WTC11 (cell line): ENCODE measurements at regions of chr21 and their contacts with region 1.

Region 1: GRCh38 chr21:15552914-15553494 is 176.8 kb upstream of the USP25 start:
- DNase-seq: no peak
- ATAC-seq: no peak
- H3K4me3 Mint-ChIP-seq: no peak overlapping the region
- H3K27ac Mint-ChIP-seq: no peak overlapping the region
- H3K4me1 Mint-ChIP-seq: peaks cover 11% of the 10 kb centered on the region
- H3K27me3 Mint-ChIP-seq: 0 out of 2 replicates have a peak, but pooled peaks cover 2% of the 10 kb centered on the region
- CTCF ChIP-seq: 0 out of 2 replicates have a peak, but pooled peaks have one; percentile 15

Region 2: DNA sequence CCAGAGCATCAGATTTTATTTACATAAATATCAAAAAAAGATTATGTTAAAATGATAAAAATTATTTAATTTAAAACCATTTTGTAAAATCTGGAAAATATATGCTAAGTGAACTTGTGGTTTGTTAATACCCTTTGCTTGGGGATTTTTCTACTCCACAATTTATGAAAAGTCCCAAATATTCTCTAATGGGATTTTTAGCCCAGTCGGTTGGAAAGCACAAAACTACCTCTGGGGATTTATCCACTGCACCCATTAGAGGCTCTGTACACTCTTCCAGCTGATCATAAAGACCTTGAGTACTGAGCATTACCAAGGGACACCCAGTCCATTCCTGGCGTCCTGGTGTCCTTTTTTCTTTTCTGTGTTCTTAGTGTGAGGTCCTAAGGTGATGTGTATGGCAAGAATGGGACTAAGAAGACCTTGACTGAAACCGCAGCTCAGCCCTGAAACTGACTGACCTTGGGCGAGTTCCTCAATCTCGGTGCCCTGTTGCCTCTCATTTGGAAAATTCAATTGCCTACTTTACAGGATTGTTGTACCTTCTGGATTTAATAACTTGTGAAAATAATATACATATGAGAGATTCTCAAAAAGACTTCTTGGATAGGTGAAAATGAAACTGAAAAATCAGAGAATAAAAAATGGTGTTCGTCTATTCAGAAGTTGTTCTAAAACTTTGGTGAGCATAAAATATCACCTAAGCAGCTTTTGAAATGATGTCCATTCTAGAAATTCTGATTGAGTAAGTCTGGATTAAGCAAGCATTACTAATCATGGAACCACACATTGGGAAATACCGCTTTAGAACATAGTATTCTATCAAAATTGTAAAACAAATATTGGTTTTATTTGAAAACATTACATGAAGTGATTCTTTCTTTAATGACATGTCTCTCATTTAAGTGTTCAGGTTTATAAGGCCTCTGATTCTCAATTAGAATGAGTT is 985.4 kb before region 1 on chr21:
- CTCF ChIA-PET with region 1: no interaction called
- POLR2A ChIA-PET with region 1: no interaction called
- DNase-seq: no peak
- ATAC-seq: no peak
- H3K4me3 Mint-ChIP-seq: no peak overlapping the region
- H3K27ac Mint-ChIP-seq: no peak overlapping the region
- H3K4me1 Mint-ChIP-seq: peaks cover 7% of the 10 kb centered on the region
- H3K27me3 Mint-ChIP-seq: no peaks in the 10 kb centered on the region
- CTCF ChIP-seq: no peak

Region 3: DNA sequence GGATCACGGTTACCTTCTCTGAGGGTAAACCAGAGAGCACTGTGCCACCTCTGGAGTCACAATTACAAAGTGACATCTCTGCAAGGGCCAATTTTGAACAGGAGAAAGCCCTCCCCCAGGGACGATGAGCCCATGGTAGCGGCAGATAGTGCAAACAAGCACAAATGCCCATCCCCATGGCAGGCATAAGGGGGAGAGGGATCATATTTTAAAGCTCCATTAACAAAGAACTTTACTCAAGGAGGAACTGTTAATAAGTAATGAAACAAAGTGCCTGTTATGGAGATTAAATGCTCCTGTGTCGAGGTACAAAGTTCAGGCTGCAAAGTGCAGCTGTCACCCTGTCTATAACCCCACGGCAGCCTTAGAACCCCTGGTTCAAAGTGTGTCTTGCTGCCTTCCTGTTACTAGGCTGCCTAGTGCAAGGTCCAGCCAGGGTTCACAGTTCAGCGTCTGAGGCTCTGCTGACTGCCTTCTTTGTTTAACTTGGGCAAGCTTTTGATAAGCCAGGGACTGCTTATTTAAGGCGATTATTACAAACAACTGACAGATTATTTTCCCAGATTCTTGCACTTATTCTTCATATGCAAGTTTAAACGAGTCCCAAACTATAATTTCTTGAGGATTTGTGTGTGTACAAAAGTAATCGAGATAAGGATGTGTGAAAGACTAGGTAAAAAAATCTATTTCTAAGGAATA is 412.5 kb before region 1 on chr21:
- CTCF ChIA-PET with region 1: no interaction called
- POLR2A ChIA-PET with region 1: no interaction called
- DNase-seq: no peak
- ATAC-seq: no peak
- H3K4me3 Mint-ChIP-seq: no peak overlapping the region
- H3K27ac Mint-ChIP-seq: no peak overlapping the region
- H3K4me1 Mint-ChIP-seq: no peaks in the 10 kb centered on the region
- H3K27me3 Mint-ChIP-seq: no peaks in the 10 kb centered on the region
- CTCF ChIP-seq: no peak

Region 4: GRCh38 chr21:15221799-15222386 is 331.1 kb before region 1 on chr21:
- CTCF ChIA-PET with region 1: interaction called, 11 read pairs
- POLR2A ChIA-PET with region 1: no interaction called
- DNase-seq: peak; percentile 58
- ATAC-seq: peak; percentile 100
- H3K4me3 Mint-ChIP-seq: no peak overlapping the region
- H3K27ac Mint-ChIP-seq: no peak overlapping the region
- H3K4me1 Mint-ChIP-seq: peaks cover 27% of the 10 kb centered on the region
- H3K27me3 Mint-ChIP-seq: peaks cover 67% of the 10 kb centered on the region
- CTCF ChIP-seq: no peak

Region 5: GRCh38 chr21:15250384-15250783 is 302.6 kb before region 1 on chr21:
- CTCF ChIA-PET with region 1: no interaction called
- POLR2A ChIA-PET with region 1: no interaction called
- DNase-seq: no peak
- ATAC-seq: no peak
- H3K4me3 Mint-ChIP-seq: no peak overlapping the region
- H3K27ac Mint-ChIP-seq: no peak overlapping the region
- H3K4me1 Mint-ChIP-seq: no peaks in the 10 kb centered on the region
- H3K27me3 Mint-ChIP-seq: peaks cover 36% of the 10 kb centered on the region
- CTCF ChIP-seq: no peak

Region 6: DNA sequence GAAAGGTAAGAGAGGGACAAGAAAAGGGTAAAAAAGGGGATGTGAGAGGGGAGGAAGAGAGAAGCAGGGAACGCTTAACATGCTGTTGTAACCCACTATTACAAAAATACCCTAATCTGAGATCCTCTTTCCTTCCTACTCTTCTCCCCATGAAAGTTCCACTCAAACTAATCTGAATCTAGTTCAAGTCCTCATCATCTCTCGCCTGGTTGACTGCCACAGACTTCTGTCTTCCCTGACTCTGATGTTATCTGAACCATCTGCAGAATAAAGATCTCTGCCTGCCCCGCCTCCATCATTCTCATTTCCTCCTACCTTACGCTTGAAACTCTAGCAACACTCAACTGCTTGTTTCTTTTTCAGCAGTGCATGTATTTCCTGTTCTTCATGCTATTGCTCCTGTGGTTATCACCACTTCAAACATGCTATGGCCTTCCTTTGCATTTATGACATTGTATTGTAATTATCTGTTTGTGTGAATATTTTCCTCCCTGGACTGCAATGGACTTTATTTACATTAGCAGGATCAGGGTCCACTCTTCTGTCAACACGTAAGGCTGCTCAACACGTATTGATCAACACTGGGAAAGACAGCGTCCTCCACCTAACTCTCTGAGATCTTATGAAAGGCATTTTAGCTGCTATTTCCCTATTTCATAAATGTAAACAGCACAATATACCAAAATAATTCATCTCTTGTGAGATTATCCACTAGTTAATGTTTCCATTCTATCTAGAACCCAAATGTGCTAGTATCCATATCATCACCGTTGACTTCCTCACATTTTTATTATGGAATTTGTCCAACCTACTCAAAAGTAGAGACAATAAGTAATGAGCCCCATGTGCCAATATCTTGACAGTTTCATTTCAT is 38.7 kb before region 1 on chr21:
- CTCF ChIA-PET with region 1: interaction called, 18 read pairs
- POLR2A ChIA-PET with region 1: no interaction called
- DNase-seq: no peak
- ATAC-seq: no peak
- H3K4me3 Mint-ChIP-seq: no peak overlapping the region
- H3K27ac Mint-ChIP-seq: no peak overlapping the region
- H3K4me1 Mint-ChIP-seq: peaks cover 3% of the 10 kb centered on the region
- H3K27me3 Mint-ChIP-seq: no peaks in the 10 kb centered on the region
- CTCF ChIP-seq: no peak

Region 7: GRCh38 chr21:15520811-15521636 is 32.0 kb before region 1 on chr21:
- CTCF ChIA-PET with region 1: interaction called, 34 read pairs
- POLR2A ChIA-PET with region 1: no interaction called
- DNase-seq: no peak
- ATAC-seq: peak; percentile 71
- H3K4me3 Mint-ChIP-seq: no peak overlapping the region
- H3K27ac Mint-ChIP-seq: no peak overlapping the region
- H3K4me1 Mint-ChIP-seq: no peaks in the 10 kb centered on the region
- H3K27me3 Mint-ChIP-seq: no peaks in the 10 kb centered on the region
- CTCF ChIP-seq: no peak

Region 8: GRCh38 chr21:15534450-15534886 is 18.5 kb before region 1 on chr21:
- CTCF ChIA-PET with region 1: interaction called, 13 read pairs
- POLR2A ChIA-PET with region 1: no interaction called
- DNase-seq: no peak
- ATAC-seq: peak; percentile 47; the same call in 1 of the 2 replicates
- H3K4me3 Mint-ChIP-seq: no peak overlapping the region
- H3K27ac Mint-ChIP-seq: no peak overlapping the region
- H3K4me1 Mint-ChIP-seq: no peaks in the 10 kb centered on the region
- H3K27me3 Mint-ChIP-seq: no peaks in the 10 kb centered on the region
- CTCF ChIP-seq: no peak

Region 9: DNA sequence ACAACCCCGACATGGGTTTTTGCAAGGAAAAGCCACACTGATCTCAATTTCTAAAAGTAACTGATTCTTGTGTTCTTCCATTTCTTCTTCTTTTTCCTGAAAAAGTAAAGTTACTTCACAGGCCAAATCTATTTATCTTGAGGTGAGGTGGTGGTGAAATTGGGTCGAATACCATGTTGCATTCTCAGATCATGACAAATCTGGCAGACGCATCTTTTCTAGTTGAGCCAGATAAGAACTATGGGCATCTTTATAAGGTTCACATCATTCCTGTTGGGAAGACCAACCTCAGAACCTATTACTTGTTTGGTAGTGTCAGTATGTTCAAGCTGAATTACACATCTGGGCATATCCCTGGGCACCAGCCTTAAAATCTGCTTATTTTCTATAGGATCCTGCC is 98.2 kb after region 1 on chr21:
- CTCF ChIA-PET with region 1: no interaction called
- POLR2A ChIA-PET with region 1: no interaction called
- DNase-seq: no peak
- ATAC-seq: no peak
- H3K4me3 Mint-ChIP-seq: no peak overlapping the region
- H3K27ac Mint-ChIP-seq: no peak overlapping the region
- H3K4me1 Mint-ChIP-seq: no peaks in the 10 kb centered on the region
- H3K27me3 Mint-ChIP-seq: no peaks in the 10 kb centered on the region
- CTCF ChIP-seq: no peak